Activated B cell treated with CpG ODN at 0.5 μM for 24 hours (primary cell): ENCODE measurements at regions of chr10 and their contacts with region 1.

Region 1: DNA sequence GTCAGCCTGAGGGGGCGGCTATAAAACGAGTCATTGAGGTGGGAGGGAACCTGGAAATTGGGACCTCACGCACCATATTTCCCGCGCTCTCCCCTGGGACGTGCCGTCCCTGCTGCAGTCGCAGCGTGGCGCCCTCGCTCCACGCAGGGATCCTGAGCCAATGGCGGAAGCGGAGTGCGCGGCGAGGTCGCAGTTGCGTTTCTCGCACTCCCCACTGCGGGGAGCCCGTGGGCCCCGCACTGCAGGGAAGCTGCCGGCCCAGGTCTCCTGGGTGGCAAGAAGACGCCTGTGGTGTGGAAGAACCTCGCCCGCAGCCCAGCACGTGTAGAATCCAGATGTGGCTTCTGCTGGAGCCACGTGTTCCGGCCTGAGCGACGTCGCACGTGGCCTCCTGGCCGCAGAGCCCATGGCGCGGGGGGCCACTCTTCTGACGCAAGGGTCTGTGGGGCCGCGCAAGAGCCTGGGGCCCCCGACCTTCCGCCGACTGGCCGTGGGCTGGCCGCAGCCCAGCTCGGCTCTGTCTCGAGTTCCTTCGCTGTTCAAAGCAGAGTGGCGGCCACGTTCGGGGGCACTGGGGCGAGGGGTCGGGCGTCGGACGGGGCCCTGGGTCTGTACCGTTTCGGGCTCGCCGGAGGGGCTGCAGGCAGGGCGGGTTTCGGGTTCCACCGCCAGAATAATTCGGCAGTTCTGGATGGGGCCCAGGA is 26.4 kb downstream of the HIF1AN start:
- DNase-seq: peak; percentile 62
- ATAC-seq: peak; percentile 98
- H3K4me3 Mint-ChIP-seq: peak overlapping the region; percentile 20
- H3K27ac Mint-ChIP-seq: no peak overlapping the region
- H3K4me1 Mint-ChIP-seq: peaks cover 15% of the 10 kb centered on the region
- H3K27me3 Mint-ChIP-seq: peaks cover 46% of the 10 kb centered on the region
- CTCF ChIP-seq: no peak

Region 2: DNA sequence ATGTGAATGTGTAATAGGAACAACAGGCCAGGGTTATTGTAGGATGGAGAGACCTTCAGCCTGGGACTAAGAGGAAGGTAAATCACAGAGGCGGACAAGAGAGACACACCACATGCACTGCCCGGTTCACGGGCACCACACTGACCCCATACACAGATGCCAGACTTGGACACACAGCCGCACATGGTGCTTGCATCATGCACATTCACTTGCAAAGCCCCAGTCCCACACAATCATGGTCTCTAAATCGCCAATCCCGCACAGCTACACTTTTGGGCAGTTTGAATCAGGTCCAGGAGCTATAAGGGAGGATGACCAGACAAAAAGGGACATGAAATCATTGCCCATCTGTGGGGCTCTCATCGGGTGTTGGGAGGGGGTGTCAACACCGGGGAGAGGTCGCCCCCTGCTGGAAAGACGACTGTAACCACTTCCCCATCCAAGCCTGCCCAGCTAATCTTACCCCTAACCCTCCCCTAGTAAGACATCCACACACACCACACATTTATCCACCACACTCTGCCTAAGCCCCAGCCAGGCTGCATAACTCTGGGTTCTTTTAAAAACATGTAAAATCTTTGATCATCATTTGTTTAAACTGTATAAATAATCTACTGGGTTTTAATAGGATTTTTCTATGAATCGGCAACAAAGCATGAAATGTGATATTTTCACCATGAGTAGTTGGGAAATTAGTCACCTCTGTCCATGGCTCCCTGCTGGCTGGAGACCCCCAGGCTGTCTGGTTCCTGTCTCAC is 310.1 kb after region 1 on chr10:
- CTCF ChIA-PET with region 1: interaction called, 6 read pairs
- POLR2A ChIA-PET with region 1: no interaction called
- intact Hi-C with region 1: loop called (anchors 1 kb)
- DNase-seq: peak; percentile 37
- ATAC-seq: peak; percentile 65
- H3K4me3 Mint-ChIP-seq: no peak overlapping the region
- H3K27ac Mint-ChIP-seq: no peak overlapping the region
- H3K4me1 Mint-ChIP-seq: no peaks in the 10 kb centered on the region
- H3K27me3 Mint-ChIP-seq: peaks cover 23% of the 10 kb centered on the region
- CTCF ChIP-seq: no peak

Region 3: DNA sequence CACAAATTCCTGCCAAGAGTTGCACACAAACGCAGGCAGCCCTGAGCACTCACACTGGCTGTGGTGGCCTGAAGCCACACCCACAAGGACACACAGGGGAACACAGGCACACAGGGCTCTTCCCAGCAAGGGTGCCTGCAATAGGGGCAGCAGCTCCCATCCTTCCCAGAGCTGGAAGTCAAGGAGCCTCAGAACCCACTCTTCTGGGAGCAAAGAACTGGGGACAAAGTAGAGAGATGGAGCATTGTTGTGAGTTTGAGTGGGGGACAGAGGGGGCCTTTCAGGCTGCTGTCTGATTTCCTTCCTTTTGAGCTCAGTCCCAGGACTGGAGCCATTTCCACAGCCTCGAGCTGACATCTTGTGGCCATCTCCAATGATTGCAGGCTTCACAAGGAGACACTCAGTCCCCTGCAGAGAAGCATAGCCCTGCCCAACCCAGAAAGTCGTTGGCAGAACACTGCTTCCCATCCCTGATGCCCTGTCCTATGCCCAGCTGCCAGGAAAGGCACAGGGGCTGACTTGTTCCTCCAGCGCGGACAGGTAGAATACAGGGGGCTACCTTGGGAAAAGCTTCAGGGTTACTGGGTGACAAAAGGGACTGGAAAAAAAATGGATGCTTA is 316.2 kb after region 1 on chr10:
- CTCF ChIA-PET with region 1: interaction called, 4 read pairs
- POLR2A ChIA-PET with region 1: no interaction called
- intact Hi-C with region 1: loop called (anchors 1 kb)
- DNase-seq: no peak
- ATAC-seq: peak; percentile 77
- H3K4me3 Mint-ChIP-seq: no peak overlapping the region
- H3K27ac Mint-ChIP-seq: no peak overlapping the region
- H3K4me1 Mint-ChIP-seq: no peaks in the 10 kb centered on the region
- H3K27me3 Mint-ChIP-seq: peaks cover 11% of the 10 kb centered on the region
- CTCF ChIP-seq: no peak